ENCODE measurements at regions of chr2 and their contacts with region 1.

Region 1: DNA sequence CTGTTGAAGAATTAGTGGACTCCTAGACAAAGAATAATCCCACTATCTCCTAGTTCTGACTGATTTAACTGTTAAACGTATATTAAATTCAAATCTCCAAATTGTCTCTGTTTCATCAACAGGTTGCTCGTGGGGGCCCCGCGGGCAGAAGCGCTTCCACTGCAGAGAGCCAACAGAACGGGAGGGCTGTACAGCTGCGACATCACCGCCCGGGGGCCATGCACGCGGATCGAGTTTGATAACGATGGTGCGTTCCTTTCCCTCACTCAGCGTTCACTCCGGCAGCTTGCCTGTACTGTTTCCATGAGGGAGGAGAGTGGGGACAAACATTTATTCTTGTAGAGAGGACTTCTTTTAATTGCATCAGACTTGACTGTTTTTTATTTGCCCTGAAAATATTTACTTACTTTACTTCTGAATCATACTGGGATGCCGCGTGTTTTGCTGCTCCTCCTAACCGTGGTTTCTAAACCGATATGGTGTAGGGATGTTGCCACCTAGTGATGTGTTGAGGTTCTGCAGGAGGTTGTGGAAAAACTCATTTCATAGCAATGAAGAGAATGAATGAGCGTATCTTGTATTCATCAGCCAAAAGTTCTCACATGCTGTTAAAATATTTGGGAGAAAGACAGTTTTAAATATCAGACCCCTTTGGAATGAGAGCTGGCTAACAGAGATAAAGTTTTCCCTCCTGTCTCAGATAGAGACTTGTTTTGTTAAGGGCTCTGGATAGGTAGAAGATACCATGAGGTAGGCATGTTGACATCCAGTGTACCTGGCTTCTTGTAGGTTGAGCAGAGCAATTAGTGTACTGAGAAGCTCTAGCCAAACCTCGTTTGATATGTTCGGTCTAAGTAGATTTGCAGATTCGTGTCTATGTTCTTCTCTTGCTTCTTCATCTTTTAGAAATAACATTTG is 38.3 kb downstream of the ITGA6 start:
- DNase-seq: peak; percentile 50
- H3K4me3 Mint-ChIP-seq: no peak overlapping the region
- H3K27ac Mint-ChIP-seq: no peak overlapping the region
- H3K4me1 Mint-ChIP-seq: peaks cover 48% of the 10 kb centered on the region
- H3K27me3 Mint-ChIP-seq: peaks cover 18% of the 10 kb centered on the region

Region 2: DNA sequence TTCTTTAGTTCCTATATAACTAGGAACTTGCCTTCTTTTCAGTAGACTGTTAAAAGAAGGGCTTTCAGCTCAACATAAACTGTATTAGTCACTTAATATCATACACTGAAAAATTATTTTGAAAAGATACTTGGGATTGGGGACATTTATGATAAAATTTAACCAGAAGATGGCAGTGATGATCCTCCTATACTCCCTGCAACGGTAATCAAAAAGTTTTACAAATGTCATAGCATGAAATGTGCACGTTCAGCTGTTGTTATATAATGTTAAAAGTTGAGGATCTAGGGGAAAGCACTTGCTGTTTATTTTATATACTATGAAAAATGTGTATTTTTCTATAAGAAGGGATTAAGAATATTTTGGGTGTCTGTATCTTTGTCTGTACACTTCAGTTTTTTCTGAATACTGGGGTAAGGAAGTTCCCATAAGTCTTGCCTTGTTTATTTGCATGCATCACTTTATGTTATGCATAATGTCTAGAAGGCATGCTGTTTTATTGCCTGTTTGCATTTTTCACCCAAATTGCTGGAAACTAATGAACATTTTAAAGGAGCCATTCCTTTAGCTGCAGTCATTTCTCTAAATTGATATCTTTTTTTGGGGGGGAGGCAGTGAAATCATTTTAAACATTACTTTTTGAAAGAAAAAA is 759.4 kb before region 1 on chr2:
- intact Hi-C with region 1: loop called (anchors 5 kb)
- DNase-seq: no peak
- H3K4me3 Mint-ChIP-seq: no peak overlapping the region
- H3K27ac Mint-ChIP-seq: no peak overlapping the region
- H3K4me1 Mint-ChIP-seq: peaks cover 6% of the 10 kb centered on the region
- H3K27me3 Mint-ChIP-seq: no peaks in the 10 kb centered on the region

Region 3: DNA sequence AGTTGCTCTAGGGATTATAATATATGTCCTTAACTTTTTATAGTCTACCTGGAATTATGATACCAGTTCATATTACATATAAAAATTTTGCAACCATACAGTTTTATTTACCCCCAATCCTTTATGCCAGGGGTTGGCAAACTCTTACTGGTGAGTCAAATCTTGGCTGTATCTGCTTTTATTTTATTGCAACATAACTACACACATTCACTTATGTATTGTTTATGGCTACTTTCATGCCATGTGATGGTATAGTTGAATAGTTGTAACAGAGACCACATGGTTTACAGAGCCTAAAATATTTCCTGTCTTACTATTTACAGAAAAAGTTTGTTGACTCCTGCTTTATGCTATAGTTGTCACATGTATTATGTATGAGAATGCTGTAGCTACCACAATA is 337.2 kb before region 1 on chr2:
- intact Hi-C with region 1: loop called (anchors 5 kb)
- DNase-seq: no peak
- H3K4me3 Mint-ChIP-seq: no peak overlapping the region
- H3K27ac Mint-ChIP-seq: no peak overlapping the region
- H3K4me1 Mint-ChIP-seq: peaks cover 1% of the 10 kb centered on the region
- H3K27me3 Mint-ChIP-seq: peaks cover 14% of the 10 kb centered on the region

Region 4: DNA sequence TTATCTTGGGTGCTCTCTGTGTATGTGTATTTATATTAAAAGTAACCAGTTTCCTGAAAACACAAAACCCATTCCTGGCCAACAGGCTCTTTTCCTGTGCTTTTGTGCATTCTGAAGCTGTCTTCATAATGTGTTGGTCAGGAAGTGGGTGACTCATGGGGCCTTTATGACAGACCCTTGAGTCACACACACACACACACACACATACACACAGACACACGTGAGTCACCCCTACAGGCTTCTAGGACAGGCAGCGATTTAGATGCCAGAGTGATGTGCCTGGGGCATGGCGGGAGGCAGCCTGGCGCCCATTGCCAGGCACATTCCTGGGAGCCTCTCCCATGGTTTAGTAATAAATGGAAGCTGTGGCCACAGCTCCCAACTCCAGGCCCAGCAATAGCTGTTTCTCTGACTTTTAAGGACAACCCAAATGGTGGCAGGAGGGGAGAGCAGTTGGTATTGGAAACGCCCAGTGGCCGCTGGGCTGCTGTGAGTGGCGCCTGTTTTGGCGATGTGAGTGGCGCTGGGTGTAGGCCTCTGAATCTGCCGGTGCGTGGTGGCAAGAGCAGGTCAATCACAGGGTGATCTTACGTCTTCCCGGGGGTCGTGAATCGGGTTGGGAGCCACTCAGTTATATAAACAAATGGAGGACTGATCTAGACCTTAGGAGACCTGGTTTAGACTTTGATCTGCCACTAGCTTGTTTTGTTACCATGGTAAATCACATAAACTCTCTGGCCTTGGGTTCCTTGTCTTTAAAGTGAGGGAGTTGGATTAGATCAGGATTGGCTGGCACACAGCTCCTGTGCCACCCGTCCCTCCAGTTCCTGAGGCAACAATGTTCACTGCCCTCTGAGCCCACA is 212.3 kb before region 1 on chr2:
- intact Hi-C with region 1: loop called (anchors 5 kb)
- DNase-seq: peak; percentile 28
- H3K4me3 Mint-ChIP-seq: no peak overlapping the region
- H3K27ac Mint-ChIP-seq: no peak overlapping the region
- H3K4me1 Mint-ChIP-seq: peaks cover 20% of the 10 kb centered on the region
- H3K27me3 Mint-ChIP-seq: peaks cover 13% of the 10 kb centered on the region

Region 5: DNA sequence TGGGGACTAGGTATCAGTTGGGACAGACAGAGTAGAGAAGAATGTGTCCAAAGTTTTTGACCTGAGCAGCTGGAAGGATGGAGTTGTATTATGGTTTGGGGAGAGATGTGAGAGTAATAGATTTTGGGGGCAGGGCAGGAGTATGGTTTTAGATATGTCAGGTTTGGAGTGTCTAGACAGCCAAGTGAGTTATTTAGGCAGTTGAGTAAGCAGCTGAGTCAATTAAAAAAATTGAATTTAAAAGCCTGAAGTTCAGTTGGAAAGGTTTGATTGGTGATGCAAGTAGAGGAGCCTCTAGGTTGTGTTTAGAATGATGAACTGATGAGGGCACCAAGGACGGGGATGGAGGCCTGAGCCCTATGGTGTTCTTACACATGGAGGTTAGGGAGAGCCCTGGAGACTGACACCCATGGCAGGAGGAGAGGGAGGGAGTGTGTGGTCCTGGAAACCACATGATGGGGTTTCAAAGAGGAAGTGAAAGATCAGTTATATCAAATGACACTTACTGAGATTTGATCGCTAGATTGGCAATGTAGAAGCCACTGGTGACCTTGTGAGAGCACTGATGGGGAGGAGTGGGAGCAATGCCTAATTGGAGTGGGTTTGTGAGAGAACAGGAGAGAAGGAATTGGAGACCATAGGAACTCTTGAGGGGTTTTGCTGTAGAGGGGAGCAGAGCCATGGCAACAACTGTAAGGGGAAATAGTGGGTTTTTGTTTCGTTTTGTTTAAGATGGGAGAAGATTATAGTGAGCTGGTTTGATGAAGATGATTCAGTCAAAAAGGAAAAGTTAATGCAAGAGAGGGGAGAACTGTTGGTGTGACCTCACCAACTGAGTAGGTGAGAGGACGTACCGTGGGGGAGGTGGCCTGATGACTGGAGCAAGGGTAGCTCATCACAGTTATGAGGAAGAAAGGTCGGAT is 28.0 kb before region 1 on chr2:
- intact Hi-C with region 1: loop called (anchors 2 kb)
- DNase-seq: peak; percentile 27
- H3K4me3 Mint-ChIP-seq: no peak overlapping the region
- H3K27ac Mint-ChIP-seq: no peak overlapping the region
- H3K4me1 Mint-ChIP-seq: peaks cover 42% of the 10 kb centered on the region
- H3K27me3 Mint-ChIP-seq: peaks cover 43% of the 10 kb centered on the region

Region 6: DNA sequence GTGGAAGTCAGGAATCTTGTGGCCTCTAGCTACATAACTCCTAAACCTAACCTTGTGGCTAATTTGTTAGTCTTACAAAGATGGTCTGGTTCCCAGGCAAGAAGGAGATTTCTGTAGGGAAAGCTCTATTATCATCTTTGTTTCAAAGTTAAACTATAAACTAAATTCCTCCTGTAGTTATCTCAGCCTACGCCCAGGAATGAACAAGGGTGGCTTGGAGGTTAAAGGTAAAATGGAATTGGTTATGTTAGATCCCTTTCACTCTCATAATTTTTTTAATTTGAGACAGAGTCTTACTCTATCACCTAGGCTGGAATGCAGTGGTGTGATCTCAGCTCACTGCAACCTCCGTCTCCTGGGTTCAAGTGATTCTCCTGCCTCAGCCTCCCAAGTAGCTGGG is 65.6 kb after region 1 on chr2:
- intact Hi-C with region 1: no loop called
- DNase-seq: no peak
- H3K4me3 Mint-ChIP-seq: no peak overlapping the region
- H3K27ac Mint-ChIP-seq: no peak overlapping the region
- H3K4me1 Mint-ChIP-seq: no peaks in the 10 kb centered on the region
- H3K27me3 Mint-ChIP-seq: no peaks in the 10 kb centered on the region